ENCODE measurements at regions of chr11 and their contacts with region 1.

Region 1: DNA sequence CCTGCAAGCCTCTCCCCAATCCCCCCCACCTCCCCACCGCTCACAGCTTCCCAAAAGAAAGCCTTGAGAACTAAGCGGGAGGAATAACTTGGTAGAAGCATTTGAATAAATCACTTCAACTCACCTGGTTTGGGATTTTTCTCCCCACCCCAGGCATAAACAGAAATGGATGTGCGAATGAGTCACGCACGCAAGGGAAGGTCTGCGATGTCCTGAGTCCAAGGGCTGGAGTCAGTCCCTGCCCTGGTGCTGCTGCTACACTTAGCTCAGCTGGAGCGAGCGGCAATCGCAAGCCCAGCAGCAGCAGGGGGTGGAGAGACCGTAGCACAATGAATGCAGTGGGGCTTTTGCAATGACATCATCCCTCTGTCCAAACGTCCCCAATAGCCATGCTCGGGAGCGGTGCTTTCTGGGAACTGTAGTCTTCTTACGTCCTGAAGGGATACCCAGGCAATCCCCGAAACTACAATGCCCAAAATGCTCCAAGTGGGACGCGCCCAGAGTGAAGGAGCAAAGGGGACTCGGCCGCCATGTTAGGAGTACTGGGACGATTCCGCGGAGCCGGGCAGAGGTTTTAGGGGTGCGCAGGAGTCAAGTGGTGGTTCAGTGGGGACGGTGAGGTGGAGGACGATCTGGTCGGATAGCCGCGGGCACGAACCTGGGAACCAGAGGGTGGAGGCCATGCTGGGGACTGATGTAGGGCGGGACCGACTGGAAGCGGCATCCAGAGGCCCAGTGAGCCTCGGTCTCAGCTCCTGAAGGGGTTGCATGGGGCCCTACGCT is at the start of gene RAB30:
- DNase-seq: peak; percentile 72 to 98 (median 92)
- ATAC-seq: peak; percentile 97
- H3K4me3 ChIP-seq: peak within 1 kb of the TSS; percentile 89
- H3K4me3 Mint-ChIP-seq: no peak within 1 kb of the TSS
- H3K27ac ChIP-seq: peak within 1 kb of the TSS; percentile 92
- H3K27ac Mint-ChIP-seq: no peak within 1 kb of the TSS
- H3K4me1 ChIP-seq: peaks cover 26 to 33% of the 10 kb centered on the region in 2 donors
- H3K4me1 Mint-ChIP-seq: peaks cover 0 to 43% (median 19%) of the 10 kb centered on the region in 7 donors
- H3K27me3 ChIP-seq: no peaks in the 10 kb centered on the region
- H3K27me3 Mint-ChIP-seq: peaks cover 0 to 4% (median 0%) of the 10 kb centered on the region in 5 donors
- total RNA-seq, gene RAB30: 7.4 to 50.2 (median 24.7) TPM

Region 2: GRCh38 chr11:82867495-82868082 is 204.2 kb before region 1 on chr11:
- CTCF ChIA-PET with region 1: interaction called, 5 read pairs
- POLR2A ChIA-PET with region 1: interaction called, 6 read pairs
- intact Hi-C with region 1: loop called in 1 of 2 experiments (anchors 1 kb)
- DNase-seq: peak; percentile 47 to 78 (median 73)
- ATAC-seq: peak; percentile 84
- H3K4me3 ChIP-seq: no peak overlapping the region
- H3K4me3 Mint-ChIP-seq: peak overlapping the region in 8 of 10 donors; percentile 22 to 78 (median 60)
- H3K27ac ChIP-seq: no peak overlapping the region
- H3K27ac Mint-ChIP-seq: peak overlapping the region in 5 of 9 donors; percentile 4 to 67 (median 33)
- H3K4me1 ChIP-seq: peaks cover 0 to 4% of the 10 kb centered on the region in 2 donors
- H3K4me1 Mint-ChIP-seq: peaks cover 3 to 12% (median 11%) of the 10 kb centered on the region in 7 donors
- H3K27me3 ChIP-seq: no peaks in the 10 kb centered on the region
- H3K27me3 Mint-ChIP-seq: peaks cover 0 to 7% (median 0%) of the 10 kb centered on the region in 5 donors

Region 3: GRCh38 chr11:82959987-82960778 is 111.6 kb before region 1 on chr11:
- CTCF ChIA-PET with region 1: no interaction called
- POLR2A ChIA-PET with region 1: interaction called, 40 read pairs
- intact Hi-C with region 1: loop called (anchors 1 kb)
- DNase-seq: peak in 7 of 9 donors; percentile 71 to 89 (median 86)
- ATAC-seq: peak; percentile 92
- H3K4me3 ChIP-seq: peak overlapping the region; percentile 37
- H3K4me3 Mint-ChIP-seq: peak overlapping the region; percentile 52 to 88 (median 80)
- H3K27ac ChIP-seq: peak overlapping the region; percentile 74
- H3K27ac Mint-ChIP-seq: peak overlapping the region; percentile 84 to 99 (median 98)
- H3K4me1 ChIP-seq: peaks cover 49 to 82% of the 10 kb centered on the region in 2 donors
- H3K4me1 Mint-ChIP-seq: peaks cover 37 to 96% (median 90%) of the 10 kb centered on the region in 7 donors
- H3K27me3 ChIP-seq: no peaks in the 10 kb centered on the region
- H3K27me3 Mint-ChIP-seq: peaks cover 0 to 8% (median 0%) of the 10 kb centered on the region in 5 donors

Region 4: DNA sequence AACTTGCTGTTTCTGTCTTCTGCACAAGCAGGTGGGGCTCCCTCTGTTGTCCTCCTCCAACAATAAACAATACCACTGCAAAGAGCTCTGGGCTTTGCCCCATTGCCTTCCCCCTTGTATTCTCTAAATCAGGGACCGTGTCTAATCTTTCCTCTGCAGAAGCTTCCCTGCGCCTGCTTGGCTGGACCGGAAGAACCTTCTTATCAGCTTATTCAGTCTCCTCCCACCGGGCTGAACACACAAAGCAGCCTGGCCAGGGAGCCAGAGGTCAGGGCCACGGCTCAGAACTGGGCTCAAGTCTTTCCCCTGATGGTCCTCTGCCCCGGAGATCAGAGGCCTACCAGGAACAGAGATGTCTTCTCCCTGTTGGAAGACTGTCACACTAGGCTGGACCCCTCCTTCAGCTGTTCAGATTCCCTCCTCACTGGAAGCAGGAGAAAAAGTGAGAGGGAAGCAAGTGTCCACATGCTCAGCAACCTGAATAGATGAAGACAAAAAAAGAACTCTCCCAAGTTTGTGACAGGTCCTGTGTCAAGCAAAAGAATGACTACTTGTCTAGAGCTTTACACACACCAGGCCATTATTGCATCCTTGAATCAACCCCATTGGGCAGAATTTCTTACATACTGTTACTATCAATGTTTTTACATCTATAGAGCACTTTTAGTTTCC is 63.7 kb before region 1 on chr11:
- CTCF ChIA-PET with region 1: no interaction called
- POLR2A ChIA-PET with region 1: interaction called, 3 read pairs
- intact Hi-C with region 1: loop called (anchors 5 to 10 kb)
- DNase-seq: no peak
- ATAC-seq: peak; percentile 29
- H3K4me3 ChIP-seq: no peak overlapping the region
- H3K4me3 Mint-ChIP-seq: peak overlapping the region in 6 of 10 donors; percentile 6 to 52 (median 27)
- H3K27ac ChIP-seq: no peak overlapping the region
- H3K27ac Mint-ChIP-seq: peak overlapping the region in 5 of 9 donors; percentile 6 to 49 (median 42)
- H3K4me1 ChIP-seq: peaks cover 0 to 8% of the 10 kb centered on the region in 2 donors
- H3K4me1 Mint-ChIP-seq: peaks cover 13 to 49% (median 38%) of the 10 kb centered on the region in 7 donors
- H3K27me3 ChIP-seq: no peaks in the 10 kb centered on the region
- H3K27me3 Mint-ChIP-seq: no peaks in the 10 kb centered on the region

Region 5: DNA sequence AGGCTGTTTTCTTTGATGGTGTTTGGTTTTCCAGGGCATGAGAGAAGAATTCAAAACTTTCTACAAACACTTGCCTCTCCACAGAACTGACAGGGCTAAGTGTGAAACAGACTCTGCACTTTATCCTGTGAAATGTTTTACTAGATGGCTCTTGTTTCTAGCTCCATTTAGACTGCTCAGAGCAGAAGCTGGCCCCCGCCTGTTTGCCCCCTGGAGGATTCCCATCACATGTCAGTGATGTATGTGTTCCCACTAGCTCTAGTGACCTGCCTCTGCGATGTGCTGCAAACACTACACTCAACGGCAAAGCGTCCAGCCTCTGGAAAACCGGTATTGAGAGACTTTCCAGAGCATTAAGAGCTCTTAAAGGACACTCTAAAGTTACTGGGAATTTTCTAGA is 43.8 kb after region 1 on chr11:
- CTCF ChIA-PET with region 1: no interaction called
- POLR2A ChIA-PET with region 1: interaction called, 23 read pairs
- intact Hi-C with region 1: loop called (anchors 1 kb)
- DNase-seq: no peak
- ATAC-seq: no peak
- H3K4me3 ChIP-seq: peak overlapping the region; percentile 20
- H3K4me3 Mint-ChIP-seq: peak overlapping the region; percentile 41 to 86 (median 74)
- H3K27ac ChIP-seq: no peak overlapping the region
- H3K27ac Mint-ChIP-seq: peak overlapping the region in 7 of 9 donors; percentile 12 to 98 (median 68)
- H3K4me1 ChIP-seq: peaks cover 27 to 36% of the 10 kb centered on the region in 2 donors
- H3K4me1 Mint-ChIP-seq: peaks cover 9 to 62% (median 56%) of the 10 kb centered on the region in 7 donors
- H3K27me3 ChIP-seq: no peaks in the 10 kb centered on the region
- H3K27me3 Mint-ChIP-seq: no peaks in the 10 kb centered on the region

Region 6: GRCh38 chr11:83249972-83250593 is 178.3 kb after region 1 on chr11:
- CTCF ChIA-PET with region 1: interaction called, 4 read pairs
- POLR2A ChIA-PET with region 1: no interaction called
- intact Hi-C with region 1: loop called in 1 of 2 experiments (anchors 5 kb)
- DNase-seq: peak in 7 of 9 donors; percentile 12 to 48 (median 40)
- ATAC-seq: peak; percentile 77
- H3K4me3 ChIP-seq: no peak overlapping the region
- H3K4me3 Mint-ChIP-seq: peak overlapping the region in 1 of 10 donors; percentile 32
- H3K27ac ChIP-seq: no peak overlapping the region
- H3K27ac Mint-ChIP-seq: no peak overlapping the region
- H3K4me1 ChIP-seq: no peaks in the 10 kb centered on the region
- H3K4me1 Mint-ChIP-seq: peaks cover 0 to 7% (median 0%) of the 10 kb centered on the region in 7 donors
- H3K27me3 ChIP-seq: no peaks in the 10 kb centered on the region
- H3K27me3 Mint-ChIP-seq: no peaks in the 10 kb centered on the region